Psoas muscle (tissue), 8 donors: ENCODE measurements at regions of chr9 and their contacts with region 1.

Region 1: DNA sequence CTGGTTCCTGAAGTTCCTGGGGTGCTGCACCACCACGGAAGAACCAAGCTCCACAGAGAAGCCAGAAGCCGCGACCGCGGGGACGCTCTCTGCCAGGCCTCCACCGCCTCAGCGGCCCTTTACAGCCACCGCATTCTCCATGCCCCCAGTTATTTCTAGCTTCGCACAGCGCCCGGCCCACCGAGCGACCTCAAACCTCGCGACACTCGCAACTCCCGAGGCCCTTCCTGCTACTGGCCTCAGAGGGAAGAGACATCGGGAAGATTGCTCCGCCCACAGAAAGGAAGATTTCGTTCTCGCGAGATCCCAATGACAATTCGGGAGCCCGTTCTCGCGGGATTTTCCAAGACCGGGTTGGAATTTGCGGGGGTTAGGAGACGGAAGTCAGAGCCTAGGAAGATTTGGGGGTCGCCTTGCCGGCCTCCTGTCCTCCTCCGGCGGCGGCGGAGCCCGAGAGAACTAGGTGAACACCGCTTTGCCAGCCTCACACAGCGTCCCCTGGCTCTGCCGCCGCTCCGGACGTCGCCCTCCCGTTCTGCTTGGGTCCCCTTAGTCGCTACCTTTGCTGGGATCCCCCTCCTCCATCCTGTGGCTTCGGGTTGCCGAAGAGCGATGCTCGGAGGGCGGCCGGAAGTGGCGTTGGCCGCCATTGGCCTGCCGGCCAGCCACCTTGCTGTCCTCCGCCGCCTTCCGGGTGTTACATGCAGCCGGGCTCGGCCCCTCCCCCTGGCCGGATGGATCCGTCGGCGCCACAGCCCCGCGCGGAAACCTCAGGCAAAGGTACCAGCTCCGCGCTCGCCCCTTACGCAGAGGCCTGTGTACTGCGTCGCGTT is at the start of gene ERCC6L2:
- DNase-seq: peak; percentile 94 to 96
- ATAC-seq: peak; percentile 96 to 97 (median 97)
- H3K4me3 ChIP-seq: no peak within 1 kb of the TSS
- H3K27ac ChIP-seq: peak within 1 kb of the TSS; percentile 100
- H3K4me1 ChIP-seq: peaks cover 22% of the 10 kb centered on the region
- H3K27me3 ChIP-seq: no peaks in the 10 kb centered on the region
- CTCF ChIP-seq: no peak
- total RNA-seq, gene ERCC6L2: 19.8 to 27.1 (median 20.6) TPM

Region 2: DNA sequence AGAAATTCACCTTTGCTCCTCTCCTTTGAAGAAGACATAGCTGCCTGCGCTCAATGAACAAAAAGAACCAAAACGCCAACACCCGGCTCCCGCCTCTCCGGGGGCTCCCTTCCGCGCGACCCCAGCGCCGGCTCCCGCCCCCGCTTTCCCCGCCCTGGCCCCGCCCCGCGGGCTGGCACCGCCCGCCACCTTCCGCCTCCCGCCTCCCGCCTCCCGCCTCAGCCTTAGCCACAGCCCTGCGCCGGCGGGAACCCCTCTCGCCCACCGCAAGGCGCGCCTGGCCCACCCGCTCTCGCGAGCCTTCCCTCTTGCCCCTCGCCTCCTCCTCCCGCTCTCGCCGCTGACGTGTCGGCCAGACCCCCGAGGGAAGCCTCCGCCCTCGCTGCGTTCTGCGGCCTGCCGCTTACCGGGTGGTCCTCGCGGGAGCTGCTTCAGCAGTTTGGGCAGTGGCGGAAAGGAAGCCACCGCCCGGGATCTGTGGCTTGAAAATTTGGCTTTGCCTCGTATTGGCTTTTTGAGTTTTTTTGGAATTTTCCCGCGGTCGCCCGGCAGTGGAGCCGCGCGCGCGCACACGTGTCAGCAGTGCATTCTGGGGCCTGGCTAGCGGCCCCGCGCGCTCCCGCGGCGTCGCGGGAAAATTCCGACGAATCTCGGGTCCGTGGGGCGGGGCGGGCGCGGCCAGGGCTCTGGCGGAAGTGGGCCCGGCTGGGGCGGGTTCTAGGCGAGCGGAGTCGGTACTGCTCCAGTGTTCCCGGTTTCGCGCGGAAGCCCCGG is 558.2 kb before region 1 on chr9 and contains the start of gene FANCC:
- intact Hi-C with region 1: loop called in 1 of 2 experiments (anchors 10 kb)
- DNase-seq: peak; percentile 94 to 95
- ATAC-seq: peak; percentile 91 to 96 (median 92)
- H3K4me3 ChIP-seq: peak within 1 kb of the TSS; percentile 100
- H3K27ac ChIP-seq: peak within 1 kb of the TSS; percentile 95
- H3K4me1 ChIP-seq: peaks cover 9% of the 10 kb centered on the region
- H3K27me3 ChIP-seq: no peaks in the 10 kb centered on the region
- CTCF ChIP-seq: no peak
- total RNA-seq, gene FANCC: 2.1 to 5.2 (median 4.2) TPM

Region 3: DNA sequence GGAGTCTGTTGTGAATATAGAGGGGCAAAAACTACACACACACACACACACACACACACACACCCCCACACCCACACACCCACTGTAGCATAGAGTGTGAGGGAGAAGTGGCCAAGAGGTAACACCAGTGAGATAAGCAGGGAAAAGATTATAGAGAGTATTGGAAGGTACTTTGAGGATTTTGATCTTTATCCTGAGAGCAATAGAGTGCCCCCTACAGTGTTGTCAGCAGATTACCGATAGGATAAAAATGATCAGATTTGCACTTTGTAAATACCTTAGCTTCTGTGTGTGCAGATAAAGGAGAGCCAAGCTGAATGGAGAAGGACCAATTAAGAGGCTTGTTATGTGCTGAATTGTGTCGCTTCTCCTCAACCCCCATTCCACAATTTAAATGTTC is 32.3 kb after region 1 on chr9:
- intact Hi-C with region 1: no loop called
- DNase-seq: no peak
- ATAC-seq: no peak
- H3K4me3 ChIP-seq: no peak overlapping the region
- H3K27ac ChIP-seq: no peak overlapping the region
- H3K4me1 ChIP-seq: no peaks in the 10 kb centered on the region
- H3K27me3 ChIP-seq: no peaks in the 10 kb centered on the region
- CTCF ChIP-seq: no peak